Gastrocnemius medialis (tissue), 4 donors: ENCODE measurements at regions of chr2 and their contacts with region 1.

Region 1: DNA sequence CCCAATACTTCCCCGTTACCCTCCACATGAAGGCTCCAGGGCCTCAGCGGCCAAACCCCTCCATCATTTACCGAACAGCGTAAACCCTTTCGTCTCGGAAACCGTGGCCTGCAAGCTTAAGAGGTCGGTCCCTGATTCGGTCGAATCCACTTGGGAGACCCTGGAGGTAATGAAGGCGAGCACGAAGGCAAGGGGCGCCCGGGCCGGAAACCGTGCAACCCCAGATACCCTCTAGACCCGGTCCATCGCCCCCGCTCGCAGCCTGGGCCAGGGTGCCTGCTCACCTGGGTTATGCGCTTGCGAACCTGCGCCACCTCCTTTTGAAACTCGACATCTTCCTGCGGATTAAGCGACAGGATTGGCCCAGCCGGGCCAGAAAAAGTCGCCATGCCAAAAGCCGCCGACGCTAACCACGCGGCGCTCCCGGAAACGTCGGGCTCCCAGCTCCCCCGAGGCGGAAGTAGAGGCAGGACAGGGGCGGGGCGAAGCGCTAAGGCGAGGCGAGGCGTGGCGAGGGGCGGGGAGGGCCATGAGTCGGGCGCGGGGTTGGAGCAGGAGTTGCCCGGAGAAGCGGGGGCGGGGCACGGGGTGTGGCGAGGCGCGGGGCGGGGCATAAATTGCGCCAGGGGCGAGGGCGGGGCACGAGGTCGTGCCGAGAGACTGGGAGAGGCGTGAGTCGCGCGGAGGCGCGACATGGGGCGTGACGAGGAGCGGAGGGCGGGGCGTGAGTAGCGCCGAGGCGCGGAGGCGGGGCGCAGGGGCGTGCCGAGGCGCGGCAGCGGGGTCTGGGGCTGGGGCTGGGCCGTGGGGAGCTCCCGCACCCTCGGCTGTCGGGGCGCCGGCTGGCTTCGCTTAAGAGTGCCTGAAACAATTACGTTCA is at the start of gene NIFK:
- DNase-seq: peak; percentile 99
- ATAC-seq: peak; percentile 93
- H3K4me3 ChIP-seq: peak within 1 kb of the TSS; percentile 88 to 99 (median 93)
- H3K27ac ChIP-seq: peak within 1 kb of the TSS; percentile 85 to 95 (median 94)
- H3K4me1 ChIP-seq: peaks cover 9 to 17% of the 10 kb centered on the region in 2 donors
- H3K27me3 ChIP-seq: no peaks in the 10 kb centered on the region
- CTCF ChIP-seq: no peak
- POLR2A ChIP-seq: peak; percentile 80 to 89
- total RNA-seq, gene NIFK: 31.1 to 42.3 (median 37.3) TPM

Region 2: GRCh38 chr2:121755236-121756111 is 18.8 kb after region 1 on chr2 and contains the start of gene TSN:
- in situ Hi-C with region 1: no loop called
- intact Hi-C with region 1: loop called (anchors 1 kb)
- DNase-seq: peak; percentile 97
- ATAC-seq: peak; percentile 99
- H3K4me3 ChIP-seq: peak within 1 kb of the TSS; percentile 79 to 94 (median 90)
- H3K27ac ChIP-seq: peak within 1 kb of the TSS; percentile 76 to 89 (median 85)
- H3K4me1 ChIP-seq: peaks cover 29 to 32% of the 10 kb centered on the region in 2 donors
- H3K27me3 ChIP-seq: no peaks in the 10 kb centered on the region
- CTCF ChIP-seq: no peak
- POLR2A ChIP-seq: peak; percentile 43 to 50
- total RNA-seq, gene TSN: 31.8 to 49.3 (median 41.2) TPM